ENCODE measurements at regions of chr18 and their contacts with region 1.

Region 1: GRCh38 chr18:37537868-37538525 is 27.6 kb downstream of the CELF4 start:
- DNase-seq: peak in 2 of 9 donors; percentile 8 to 56
- ATAC-seq: peak; percentile 30
- H3K4me3 ChIP-seq: no peak overlapping the region
- H3K4me3 Mint-ChIP-seq: peak overlapping the region in 1 of 10 donors; percentile 23
- H3K27ac ChIP-seq: no peak overlapping the region
- H3K27ac Mint-ChIP-seq: no peak overlapping the region
- H3K4me1 ChIP-seq: no peaks in the 10 kb centered on the region
- H3K4me1 Mint-ChIP-seq: peaks cover 0 to 6% (median 5%) of the 10 kb centered on the region in 7 donors
- H3K27me3 ChIP-seq: no peaks in the 10 kb centered on the region
- H3K27me3 Mint-ChIP-seq: peaks cover 14 to 57% (median 23%) of the 10 kb centered on the region in 5 donors

Region 2: GRCh38 chr18:36942264-36942663 is 595.7 kb before region 1 on chr18:
- CTCF ChIA-PET with region 1: no interaction called
- POLR2A ChIA-PET with region 1: no interaction called
- intact Hi-C with region 1: loop called in 1 of 2 experiments (anchors 5 kb)
- DNase-seq: peak in 4 of 9 donors; percentile 4 to 23 (median 10)
- ATAC-seq: no peak
- H3K4me3 ChIP-seq: no peak overlapping the region
- H3K4me3 Mint-ChIP-seq: no peak overlapping the region
- H3K27ac ChIP-seq: no peak overlapping the region
- H3K27ac Mint-ChIP-seq: no peak overlapping the region
- H3K4me1 ChIP-seq: no peaks in the 10 kb centered on the region
- H3K4me1 Mint-ChIP-seq: peaks cover 0 to 5% (median 0%) of the 10 kb centered on the region in 7 donors
- H3K27me3 ChIP-seq: no peaks in the 10 kb centered on the region
- H3K27me3 Mint-ChIP-seq: no peaks in the 10 kb centered on the region

Region 3: DNA sequence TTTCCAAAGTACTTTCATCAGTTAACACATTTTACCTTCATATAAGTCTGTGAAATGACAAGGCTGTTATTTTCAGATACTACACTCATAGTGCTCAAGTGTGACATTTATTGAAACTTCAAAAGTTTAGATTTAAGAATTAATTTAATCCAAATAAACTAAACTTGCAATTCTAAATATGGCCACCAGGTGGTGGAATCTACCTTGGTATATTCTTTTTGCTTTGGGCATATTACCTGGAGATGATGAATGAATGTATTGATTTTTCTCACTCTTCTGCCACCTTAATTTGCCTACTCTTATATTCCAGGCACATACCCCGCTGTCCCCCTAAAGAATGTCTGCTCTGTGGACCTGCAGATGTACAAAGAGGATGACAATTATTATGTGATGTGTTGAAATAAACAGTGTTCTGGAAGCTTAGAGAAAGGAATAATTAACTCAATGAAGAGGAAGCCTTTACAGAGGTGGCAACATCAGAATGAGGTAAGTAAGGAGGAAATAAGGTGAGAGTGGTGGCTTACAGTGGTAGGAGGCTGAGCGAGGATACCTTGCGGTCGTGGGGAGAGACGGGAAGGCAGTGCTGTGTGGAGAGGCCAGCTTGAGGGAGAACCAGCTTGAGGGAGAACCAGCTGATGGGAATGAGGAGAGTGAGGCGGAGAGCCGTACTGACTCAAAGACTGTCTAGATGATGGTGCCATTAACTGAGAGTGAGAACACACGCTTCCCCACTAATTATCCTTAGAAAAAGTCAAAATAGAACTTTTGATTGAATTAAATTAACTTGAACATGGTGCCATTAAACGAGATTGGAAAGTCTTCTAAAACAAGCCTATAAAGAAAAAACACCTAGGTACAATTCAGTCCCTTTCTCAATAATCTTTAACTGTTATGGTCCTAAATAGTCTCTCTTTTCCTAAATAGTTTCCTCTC is 151.9 kb before region 1 on chr18:
- CTCF ChIA-PET with region 1: no interaction called
- POLR2A ChIA-PET with region 1: no interaction called
- intact Hi-C with region 1: loop called in 1 of 2 experiments (anchors 1 kb)
- DNase-seq: peak in 5 of 9 donors; percentile 13 to 49 (median 30)
- ATAC-seq: no peak
- H3K4me3 ChIP-seq: no peak overlapping the region
- H3K4me3 Mint-ChIP-seq: peak overlapping the region in 1 of 10 donors; percentile 4
- H3K27ac ChIP-seq: no peak overlapping the region
- H3K27ac Mint-ChIP-seq: no peak overlapping the region
- H3K4me1 ChIP-seq: no peaks in the 10 kb centered on the region
- H3K4me1 Mint-ChIP-seq: peaks cover 0 to 6% (median 0%) of the 10 kb centered on the region in 7 donors
- H3K27me3 ChIP-seq: no peaks in the 10 kb centered on the region
- H3K27me3 Mint-ChIP-seq: peaks cover 1 to 16% (median 10%) of the 10 kb centered on the region in 5 donors

Region 4: GRCh38 chr18:37443325-37444055 is 94.5 kb before region 1 on chr18:
- CTCF ChIA-PET with region 1: no interaction called
- POLR2A ChIA-PET with region 1: no interaction called
- intact Hi-C with region 1: loop called in 1 of 2 experiments (anchors 1 kb)
- DNase-seq: no peak
- ATAC-seq: no peak
- H3K4me3 ChIP-seq: no peak overlapping the region
- H3K4me3 Mint-ChIP-seq: no peak overlapping the region
- H3K27ac ChIP-seq: no peak overlapping the region
- H3K27ac Mint-ChIP-seq: peak overlapping the region in 1 of 9 donors; percentile 4
- H3K4me1 ChIP-seq: no peaks in the 10 kb centered on the region
- H3K4me1 Mint-ChIP-seq: peaks cover 0 to 5% (median 0%) of the 10 kb centered on the region in 7 donors
- H3K27me3 ChIP-seq: no peaks in the 10 kb centered on the region
- H3K27me3 Mint-ChIP-seq: peaks cover 0 to 14% (median 9%) of the 10 kb centered on the region in 5 donors

Region 5: GRCh38 chr18:37453752-37454151 is 84.2 kb before region 1 on chr18:
- CTCF ChIA-PET with region 1: no interaction called
- POLR2A ChIA-PET with region 1: no interaction called
- intact Hi-C with region 1: no loop called
- DNase-seq: no peak
- ATAC-seq: no peak
- H3K4me3 ChIP-seq: no peak overlapping the region
- H3K4me3 Mint-ChIP-seq: no peak overlapping the region
- H3K27ac ChIP-seq: no peak overlapping the region
- H3K27ac Mint-ChIP-seq: no peak overlapping the region
- H3K4me1 ChIP-seq: no peaks in the 10 kb centered on the region
- H3K4me1 Mint-ChIP-seq: no peaks in the 10 kb centered on the region
- H3K27me3 ChIP-seq: no peaks in the 10 kb centered on the region
- H3K27me3 Mint-ChIP-seq: peaks cover 0 to 10% (median 0%) of the 10 kb centered on the region in 5 donors

Region 6: DNA sequence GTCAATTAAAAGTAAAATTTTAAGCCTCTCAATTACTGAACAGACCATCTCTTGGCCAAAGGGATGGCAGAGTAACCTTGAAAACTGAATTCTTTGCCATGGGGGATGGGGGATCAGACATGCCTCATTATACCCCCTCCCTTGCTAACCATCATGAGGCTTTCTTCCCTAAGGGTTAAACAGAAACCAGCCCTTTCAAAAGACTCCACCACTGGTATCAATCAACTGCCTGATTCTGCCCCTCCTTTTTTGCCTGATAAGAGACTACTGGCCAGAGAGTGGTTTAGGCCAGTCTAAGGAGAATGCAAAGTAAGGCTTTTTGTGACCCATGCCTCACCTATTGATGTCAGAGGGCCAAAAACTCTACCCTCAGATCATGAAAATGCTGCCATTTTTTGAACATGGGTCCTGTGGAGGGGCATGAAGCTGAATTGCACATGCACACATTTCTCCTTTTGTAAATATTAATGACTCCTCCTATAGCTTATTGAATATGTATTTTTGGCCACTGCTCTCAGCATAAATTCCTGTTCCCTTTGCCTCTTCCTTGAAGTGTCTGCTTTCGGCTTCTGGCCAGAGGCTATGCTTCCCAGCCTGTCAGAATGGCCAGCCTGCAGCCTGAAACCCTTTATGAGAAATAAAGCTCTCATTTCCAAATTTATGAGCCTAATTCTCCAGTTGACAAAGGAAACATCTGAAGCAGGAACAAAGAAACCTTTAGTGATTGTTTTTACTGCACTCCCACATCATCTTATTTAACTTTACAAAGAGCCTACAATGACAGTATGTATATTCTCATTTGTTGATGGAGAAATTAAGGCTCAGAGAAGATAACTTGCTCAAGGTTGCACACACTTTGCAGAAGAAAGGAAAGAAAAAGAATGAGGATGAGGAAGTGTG is 298.3 kb after region 1 on chr18:
- CTCF ChIA-PET with region 1: no interaction called
- POLR2A ChIA-PET with region 1: no interaction called
- intact Hi-C with region 1: no loop called
- DNase-seq: no peak
- ATAC-seq: no peak
- H3K4me3 ChIP-seq: no peak overlapping the region
- H3K4me3 Mint-ChIP-seq: no peak overlapping the region
- H3K27ac ChIP-seq: no peak overlapping the region
- H3K27ac Mint-ChIP-seq: no peak overlapping the region
- H3K4me1 ChIP-seq: no peaks in the 10 kb centered on the region
- H3K4me1 Mint-ChIP-seq: no peaks in the 10 kb centered on the region
- H3K27me3 ChIP-seq: no peaks in the 10 kb centered on the region
- H3K27me3 Mint-ChIP-seq: no peaks in the 10 kb centered on the region

Measured in naive thymus-derived CD4-positive, alpha-beta T cell (primary cell).